ENCODE measurements at regions of chr19 and their contacts with region 1.

Region 1: GRCh38 chr19:5827891-5828660 is 11.4 kb downstream of the FUT6 start:
- DNase-seq: peak; percentile 96
- ATAC-seq: peak; percentile 86
- H3K4me3 Mint-ChIP-seq: peak overlapping the region; percentile 92
- H3K27ac Mint-ChIP-seq: peak overlapping the region; percentile 97
- H3K4me1 Mint-ChIP-seq: peaks cover 15% of the 10 kb centered on the region
- H3K27me3 Mint-ChIP-seq: no peaks in the 10 kb centered on the region

Region 2: GRCh38 chr19:5790573-5791520 is 37.2 kb before region 1 on chr19 and contains the start of gene DUS3L:
- CTCF ChIA-PET with region 1: interaction called, 8 read pairs
- POLR2A ChIA-PET with region 1: interaction called, 12 read pairs
- DNase-seq: peak; percentile 98
- ATAC-seq: peak; percentile 96
- H3K4me3 Mint-ChIP-seq: peak within 1 kb of the TSS; percentile 100
- H3K27ac Mint-ChIP-seq: peak within 1 kb of the TSS; percentile 100
- H3K4me1 Mint-ChIP-seq: peaks cover 16% of the 10 kb centered on the region
- H3K27me3 Mint-ChIP-seq: no peaks in the 10 kb centered on the region
- total RNA-seq, gene DUS3L: 56.6 to 66.3 TPM

Region 3: DNA sequence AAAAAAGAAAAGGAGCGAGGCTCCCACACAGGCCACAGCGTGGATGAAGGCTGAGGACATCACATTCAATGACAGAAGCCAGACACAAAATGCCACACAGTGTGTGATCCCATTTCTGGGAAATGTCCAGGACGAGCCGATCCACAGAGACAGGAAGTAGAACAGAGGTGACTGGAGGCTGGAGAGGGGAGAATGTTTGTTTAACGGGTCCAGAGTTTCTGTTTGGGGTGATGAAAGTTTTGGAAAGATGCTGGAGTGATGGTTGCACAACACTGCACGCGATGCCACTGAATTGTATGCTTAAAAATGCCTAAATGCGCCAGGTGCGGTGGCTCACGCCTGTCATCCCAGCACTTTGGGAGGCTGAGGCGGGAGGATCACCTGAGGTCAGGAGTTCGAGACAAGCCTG is 42.9 kb after region 1 on chr19:
- CTCF ChIA-PET with region 1: no interaction called
- POLR2A ChIA-PET with region 1: no interaction called
- DNase-seq: no peak
- ATAC-seq: no peak
- H3K4me3 Mint-ChIP-seq: no peak overlapping the region
- H3K27ac Mint-ChIP-seq: no peak overlapping the region
- H3K4me1 Mint-ChIP-seq: peaks cover 3% of the 10 kb centered on the region
- H3K27me3 Mint-ChIP-seq: no peaks in the 10 kb centered on the region

Region 4: GRCh38 chr19:5904352-5905113 is 76.5 kb after region 1 on chr19 and contains the start of gene VMAC:
- CTCF ChIA-PET with region 1: interaction called, 6 read pairs
- POLR2A ChIA-PET with region 1: interaction called, 53 read pairs
- DNase-seq: peak; percentile 100
- ATAC-seq: peak; percentile 87
- H3K4me3 Mint-ChIP-seq: peak within 1 kb of the TSS; percentile 89
- H3K27ac Mint-ChIP-seq: peak within 1 kb of the TSS; percentile 100
- H3K4me1 Mint-ChIP-seq: peaks cover 26% of the 10 kb centered on the region
- H3K27me3 Mint-ChIP-seq: no peaks in the 10 kb centered on the region
- total RNA-seq, gene VMAC: 6.2 to 6.8 TPM